Activated naive CD4-positive, alpha-beta T cell treated with anti-CD3 and anti-CD28 coated beads for 36 hours (primary cell): ENCODE measurements at regions of chr14 and their contacts with region 1.

Region 1: DNA sequence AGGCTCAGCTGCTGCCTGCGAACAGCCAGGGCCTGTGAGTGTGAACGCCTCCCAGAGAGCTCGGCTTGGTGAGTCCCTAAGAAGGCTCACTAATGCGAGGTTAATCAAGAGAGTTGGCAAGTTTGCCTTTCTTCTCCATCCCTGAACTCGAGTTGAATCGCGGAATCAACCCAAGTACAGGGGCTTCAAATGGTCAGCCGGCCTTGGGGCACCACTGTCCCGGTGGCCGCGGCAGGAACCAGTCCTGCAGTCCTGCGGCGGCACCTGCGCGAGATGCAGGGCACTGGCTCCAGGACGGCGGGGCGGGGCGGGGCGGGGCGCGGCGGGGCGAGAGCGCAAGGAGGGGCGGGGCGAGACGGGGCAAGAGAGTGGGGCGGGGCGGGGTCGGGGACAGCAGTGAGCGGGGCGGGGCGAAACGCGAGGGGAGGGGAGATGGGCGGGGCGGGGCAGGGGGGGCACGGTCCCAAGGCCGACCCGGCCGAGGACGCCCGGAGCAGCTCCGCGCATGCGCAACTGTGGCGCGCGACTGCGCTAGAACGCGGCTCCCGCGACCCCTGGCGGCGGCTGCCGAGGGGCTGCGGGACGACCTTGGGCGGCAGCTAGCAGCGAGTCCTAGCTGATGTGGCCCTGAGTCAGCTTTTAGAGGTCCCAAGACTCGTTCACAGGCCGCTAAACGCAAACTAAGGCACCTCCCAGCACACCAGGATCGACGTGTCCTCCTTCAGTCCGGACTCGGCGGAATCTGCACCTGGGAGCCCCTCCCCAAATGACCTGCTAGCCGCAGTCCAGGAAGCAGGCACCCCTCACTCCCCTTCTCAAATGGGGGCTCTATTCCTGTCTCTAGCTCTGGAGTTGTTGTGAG is 58.0 kb downstream of the TTC7B start:
- DNase-seq: peak; percentile 92
- H3K4me3 Mint-ChIP-seq: peak overlapping the region; percentile 76
- H3K27ac Mint-ChIP-seq: peak overlapping the region; percentile 80
- H3K4me1 Mint-ChIP-seq: peaks cover 14% of the 10 kb centered on the region
- H3K27me3 Mint-ChIP-seq: peaks cover 2% of the 10 kb centered on the region

Region 2: DNA sequence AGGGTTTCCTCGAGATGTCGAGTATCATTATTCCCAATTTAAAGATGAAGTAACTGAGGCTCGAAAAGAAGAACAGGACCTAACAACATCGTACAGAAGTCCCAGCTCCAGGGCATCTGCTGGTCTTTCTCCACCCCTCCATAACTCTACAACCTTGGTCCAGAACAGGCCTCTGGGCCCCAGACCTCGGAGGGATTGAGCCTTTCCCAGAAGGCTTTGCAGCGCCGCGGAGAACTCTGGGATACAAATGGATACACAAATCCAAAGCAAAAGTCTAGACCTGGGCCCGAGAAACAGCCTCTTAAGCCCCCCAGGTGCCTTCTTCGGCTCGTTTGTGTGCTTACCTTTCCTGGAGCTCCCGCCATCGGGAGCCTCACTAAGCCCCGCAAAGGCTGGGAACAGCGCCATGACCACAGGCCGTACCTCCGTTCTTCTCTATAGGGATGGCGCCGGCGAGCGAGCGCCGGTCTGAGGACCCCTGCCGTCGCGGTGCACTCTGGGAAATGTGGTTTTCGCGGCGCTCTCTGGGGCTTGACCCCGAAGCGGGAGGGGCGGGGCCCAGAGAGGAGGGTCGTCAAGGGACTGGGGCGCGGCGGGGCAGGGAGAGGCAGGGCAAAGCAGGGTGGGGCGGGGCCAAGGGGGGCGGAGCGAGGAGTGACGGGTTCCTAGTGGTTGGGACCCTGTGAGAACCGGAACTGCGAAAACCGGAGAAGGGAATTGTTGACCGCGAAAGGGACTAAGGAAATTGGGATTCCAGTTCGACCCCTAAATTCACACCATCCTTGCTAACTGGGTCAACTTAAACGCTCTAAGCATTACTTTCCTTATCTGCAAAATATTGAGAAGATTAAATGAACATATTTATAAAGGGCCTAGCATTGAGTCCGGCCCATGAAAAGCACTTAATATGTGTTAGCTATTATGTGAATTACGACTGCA is 426.5 kb before region 1 on chr14 and contains the start of gene NRDE2:
- CTCF ChIA-PET with region 1: no interaction called
- intact Hi-C with region 1: loop called (anchors 2 kb)
- DNase-seq: peak; percentile 98
- H3K4me3 Mint-ChIP-seq: peak within 1 kb of the TSS; percentile 90
- H3K27ac Mint-ChIP-seq: peak within 1 kb of the TSS; percentile 92
- H3K4me1 Mint-ChIP-seq: peaks cover 23% of the 10 kb centered on the region
- H3K27me3 Mint-ChIP-seq: no peaks in the 10 kb centered on the region
- total RNA-seq, gene NRDE2: 22.0 to 23.1 TPM

Region 3: DNA sequence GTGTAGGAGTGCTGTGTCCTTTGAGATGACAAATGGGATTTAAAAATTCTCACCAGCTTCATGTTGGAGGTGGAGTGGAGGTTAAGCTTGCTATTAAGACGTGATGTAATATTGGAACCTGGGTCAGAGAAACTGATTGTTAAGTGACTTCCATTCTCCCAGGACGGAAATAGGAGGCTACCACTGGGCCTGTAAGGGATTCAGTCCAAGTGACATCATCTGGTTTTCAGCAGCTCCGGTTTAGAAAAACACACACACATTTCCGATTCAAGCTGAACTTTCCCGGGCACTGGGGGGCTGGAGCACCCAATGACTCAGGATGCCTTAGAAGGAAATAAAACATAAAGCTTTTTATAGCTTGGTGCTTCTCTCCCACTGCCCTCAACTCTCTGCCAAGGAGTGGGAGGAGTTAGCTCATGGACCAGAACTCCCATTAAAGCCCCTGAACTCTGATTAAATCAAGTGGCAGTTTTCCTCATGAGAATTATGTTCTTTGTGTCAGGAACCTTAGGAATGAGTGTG is 349.0 kb before region 1 on chr14:
- CTCF ChIA-PET with region 1: no interaction called
- intact Hi-C with region 1: no loop called
- DNase-seq: peak; percentile 11
- H3K4me3 Mint-ChIP-seq: no peak overlapping the region
- H3K27ac Mint-ChIP-seq: peak overlapping the region; percentile 65
- H3K4me1 Mint-ChIP-seq: peaks cover 35% of the 10 kb centered on the region
- H3K27me3 Mint-ChIP-seq: no peaks in the 10 kb centered on the region

Region 4: GRCh38 chr14:90697577-90698206 is 60.6 kb before region 1 on chr14:
- CTCF ChIA-PET with region 1: interaction called, 4 read pairs
- intact Hi-C with region 1: loop called (anchors 2 kb)
- DNase-seq: peak; percentile 91
- H3K4me3 Mint-ChIP-seq: no peak overlapping the region
- H3K27ac Mint-ChIP-seq: no peak overlapping the region
- H3K4me1 Mint-ChIP-seq: no peaks in the 10 kb centered on the region
- H3K27me3 Mint-ChIP-seq: no peaks in the 10 kb centered on the region

Region 5: DNA sequence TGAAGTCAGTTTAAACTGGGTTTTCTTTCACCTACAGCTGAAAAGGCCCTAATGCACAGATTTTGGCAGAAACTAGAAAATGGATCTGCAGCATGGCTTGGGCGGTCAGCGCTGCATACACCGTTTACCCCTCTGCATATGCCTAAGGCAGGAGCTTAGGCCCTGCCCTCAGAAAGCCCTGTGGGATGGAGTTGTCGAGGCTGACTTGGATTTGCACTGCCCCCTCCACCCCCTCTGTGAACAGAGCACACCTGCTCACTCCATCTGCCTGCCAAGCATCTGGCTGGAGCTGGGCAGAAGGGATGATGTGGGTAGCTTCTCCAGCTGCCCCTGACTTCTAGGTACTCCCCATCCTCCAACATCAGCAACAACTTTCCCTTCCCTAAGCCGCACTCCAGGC is 16.1 kb after region 1 on chr14:
- CTCF ChIA-PET with region 1: interaction called, 10 read pairs
- intact Hi-C with region 1: no loop called
- DNase-seq: no peak
- H3K4me3 Mint-ChIP-seq: no peak overlapping the region
- H3K27ac Mint-ChIP-seq: no peak overlapping the region
- H3K4me1 Mint-ChIP-seq: no peaks in the 10 kb centered on the region
- H3K27me3 Mint-ChIP-seq: no peaks in the 10 kb centered on the region

Region 6: GRCh38 chr14:90827916-90828610 is 69.8 kb after region 1 on chr14:
- CTCF ChIA-PET with region 1: interaction called, 4 read pairs
- intact Hi-C with region 1: loop called (anchors 1 kb)
- DNase-seq: peak; percentile 96
- H3K4me3 Mint-ChIP-seq: peak overlapping the region; percentile 76
- H3K27ac Mint-ChIP-seq: peak overlapping the region; percentile 66
- H3K4me1 Mint-ChIP-seq: peaks cover 17% of the 10 kb centered on the region
- H3K27me3 Mint-ChIP-seq: no peaks in the 10 kb centered on the region

Region 7: DNA sequence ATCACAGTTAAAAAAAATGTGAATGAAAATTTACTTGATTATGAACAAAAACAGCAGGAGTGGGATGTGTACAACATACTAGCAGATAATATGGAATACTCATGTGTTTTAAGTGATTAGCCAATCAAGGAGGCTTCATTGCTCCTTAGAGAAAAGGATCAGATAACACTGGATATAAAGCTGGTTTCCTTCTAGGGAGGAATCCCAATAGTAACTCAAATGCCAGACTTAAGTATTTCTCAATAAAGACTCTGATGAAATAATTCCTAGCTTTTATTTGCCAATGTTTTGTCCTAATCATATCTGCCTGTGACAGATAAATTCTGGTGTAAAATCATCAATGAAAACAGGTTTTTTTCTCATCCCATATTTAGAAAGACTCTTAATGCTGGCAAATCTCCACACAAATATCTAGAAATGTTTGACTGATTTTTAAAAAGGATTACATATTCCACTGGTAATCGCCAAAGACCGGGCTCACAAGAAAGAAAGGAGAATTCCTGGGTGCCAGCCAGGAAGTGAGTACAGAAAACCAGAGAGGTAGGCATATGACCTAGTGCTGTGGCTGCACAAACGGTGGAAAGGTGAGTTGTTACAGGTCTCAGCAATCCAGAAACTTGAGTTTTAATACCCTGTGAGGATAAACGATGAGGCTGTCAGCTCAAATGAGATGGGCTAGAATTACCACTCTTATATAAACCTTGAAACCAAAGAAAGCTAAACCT is 166.5 kb after region 1 on chr14:
- CTCF ChIA-PET with region 1: no interaction called
- intact Hi-C with region 1: no loop called
- DNase-seq: no peak
- H3K4me3 Mint-ChIP-seq: no peak overlapping the region
- H3K27ac Mint-ChIP-seq: no peak overlapping the region
- H3K4me1 Mint-ChIP-seq: no peaks in the 10 kb centered on the region
- H3K27me3 Mint-ChIP-seq: no peaks in the 10 kb centered on the region